HCT116 (cell line): ENCODE measurements at regions of chr17 and their contacts with region 1.

Region 1: GRCh38 chr17:42819944-42820535 is 4.0 kb downstream of the BECN1 start:
- DNase-seq: peak; percentile 21
- ATAC-seq: no peak
- H3K4me3 ChIP-seq: no peak overlapping the region
- H3K27ac ChIP-seq: no peak overlapping the region
- H3K4me1 ChIP-seq: peaks cover 2 to 16% of the 10 kb centered on the region in 2 experiments; a peak in 2 of 4 replicates
- H3K27me3 ChIP-seq: no peaks in the 10 kb centered on the region
- CTCF ChIP-seq: peak; percentile 26 to 74 (median 68); a peak in 4 of 6 replicates
- POLR2A ChIP-seq: no peak
- RAD21 ChIP-seq: peak; percentile 27; the same call in 1 of the 2 replicates

Region 2: DNA sequence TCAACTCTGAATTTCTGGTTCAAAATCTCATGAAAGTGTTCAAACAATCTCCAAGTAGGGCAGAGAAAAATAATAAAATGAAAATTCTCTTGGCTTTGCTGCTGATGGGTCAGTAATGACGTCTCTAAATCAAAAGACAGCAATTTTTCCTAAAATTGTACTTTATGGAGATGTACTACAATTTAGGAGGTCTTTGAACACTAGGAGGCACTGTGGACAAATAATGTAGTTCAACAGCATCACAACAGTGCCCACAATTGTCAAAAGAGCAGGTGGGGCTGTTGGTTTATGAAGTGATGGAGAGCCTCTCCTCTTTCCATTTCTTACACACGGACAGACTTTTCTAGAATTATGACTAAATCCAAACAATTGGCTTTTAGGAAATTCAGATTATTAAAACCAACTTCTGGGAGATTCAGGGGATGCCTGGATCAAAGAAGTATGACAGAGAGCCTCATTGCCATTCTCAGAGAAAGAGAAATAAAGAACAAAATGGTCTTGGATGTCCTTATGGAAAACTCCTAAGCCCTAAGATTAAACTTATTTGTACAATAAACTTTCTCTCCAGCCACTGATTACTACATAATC is 99.0 kb before region 1 on chr17:
- CTCF ChIA-PET with region 1: no interaction called
- POLR2A ChIA-PET with region 1: no interaction called
- RAD21 ChIA-PET with region 1: no interaction called
- intact Hi-C with region 1: loop called (anchors 5 kb)
- DNase-seq: peak; percentile 46
- ATAC-seq: peak; percentile 88
- H3K4me3 ChIP-seq: no peak overlapping the region
- H3K27ac ChIP-seq: no peak overlapping the region
- H3K4me1 ChIP-seq: no peaks in the 10 kb centered on the region
- H3K27me3 ChIP-seq: no peaks in the 10 kb centered on the region
- CTCF ChIP-seq: peak; percentile 56 to 85 (median 72)
- POLR2A ChIP-seq: no peak
- RAD21 ChIP-seq: peak; percentile 78

Region 3: DNA sequence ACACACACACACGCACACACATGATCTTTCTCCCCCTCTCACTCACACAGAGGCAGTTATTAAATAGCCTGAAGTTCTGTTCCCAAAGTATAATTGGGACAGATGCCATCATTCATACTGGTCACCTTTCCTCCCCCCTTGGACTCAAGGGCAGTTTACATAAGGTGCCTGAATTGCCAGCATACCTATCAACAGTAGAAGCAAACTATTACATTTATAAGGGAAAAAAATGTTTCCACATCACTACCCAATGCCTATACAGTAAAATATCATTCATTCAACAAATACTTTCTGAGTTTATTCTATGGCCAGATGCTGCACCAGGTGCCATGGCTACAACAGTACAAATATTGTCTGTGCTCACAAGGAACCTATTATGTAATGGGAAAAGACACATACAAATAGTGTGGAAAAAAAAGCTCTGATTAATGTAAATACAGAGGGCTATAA is 15.1 kb before region 1 on chr17:
- CTCF ChIA-PET with region 1: interaction called, 11 read pairs
- POLR2A ChIA-PET with region 1: no interaction called
- RAD21 ChIA-PET with region 1: no interaction called
- intact Hi-C with region 1: no loop called
- DNase-seq: no peak
- ATAC-seq: no peak
- H3K4me3 ChIP-seq: no peak overlapping the region
- H3K27ac ChIP-seq: no peak overlapping the region
- H3K4me1 ChIP-seq: no peaks in the 10 kb centered on the region
- H3K27me3 ChIP-seq: no peaks in the 10 kb centered on the region
- CTCF ChIP-seq: no peak
- POLR2A ChIP-seq: no peak
- RAD21 ChIP-seq: no peak